Right cardiac atrium (tissue), 5 donors: ENCODE measurements at regions of chr1 and their contacts with region 1.

Region 1: GRCh38 chr1:183339556-183340167 is 78.5 kb downstream of the NMNAT2 start:
- DNase-seq: no peak
- ATAC-seq: no peak
- H3K4me3 ChIP-seq: no peak overlapping the region
- H3K27ac ChIP-seq: peak overlapping the region; percentile 66
- H3K4me1 ChIP-seq: no peaks in the 10 kb centered on the region
- H3K27me3 ChIP-seq: no peaks in the 10 kb centered on the region

Region 2: DNA sequence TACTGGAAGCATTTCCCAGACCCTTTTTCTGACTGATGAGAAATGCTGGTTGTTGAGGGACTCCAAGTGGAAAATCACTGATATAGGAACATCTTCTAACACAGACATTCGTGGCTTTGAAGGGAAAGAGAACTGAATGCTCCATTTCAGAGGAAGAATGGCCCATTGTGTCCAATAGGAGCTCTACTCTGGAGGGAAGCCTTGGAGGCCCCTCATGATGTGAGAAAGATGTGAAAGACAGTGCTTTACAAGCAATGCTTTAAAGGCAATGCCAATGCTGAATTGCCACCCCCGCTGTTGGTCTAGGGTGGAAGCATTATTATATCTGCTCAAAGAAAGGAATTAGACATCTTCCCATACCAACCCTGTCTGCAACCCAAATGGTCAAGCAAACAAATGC is 64.8 kb after region 1 on chr1:
- intact Hi-C with region 1: no loop called
- DNase-seq: no peak
- ATAC-seq: no peak
- H3K4me3 ChIP-seq: no peak overlapping the region
- H3K27ac ChIP-seq: no peak overlapping the region
- H3K4me1 ChIP-seq: no peaks in the 10 kb centered on the region
- H3K27me3 ChIP-seq: no peaks in the 10 kb centered on the region

Region 3: DNA sequence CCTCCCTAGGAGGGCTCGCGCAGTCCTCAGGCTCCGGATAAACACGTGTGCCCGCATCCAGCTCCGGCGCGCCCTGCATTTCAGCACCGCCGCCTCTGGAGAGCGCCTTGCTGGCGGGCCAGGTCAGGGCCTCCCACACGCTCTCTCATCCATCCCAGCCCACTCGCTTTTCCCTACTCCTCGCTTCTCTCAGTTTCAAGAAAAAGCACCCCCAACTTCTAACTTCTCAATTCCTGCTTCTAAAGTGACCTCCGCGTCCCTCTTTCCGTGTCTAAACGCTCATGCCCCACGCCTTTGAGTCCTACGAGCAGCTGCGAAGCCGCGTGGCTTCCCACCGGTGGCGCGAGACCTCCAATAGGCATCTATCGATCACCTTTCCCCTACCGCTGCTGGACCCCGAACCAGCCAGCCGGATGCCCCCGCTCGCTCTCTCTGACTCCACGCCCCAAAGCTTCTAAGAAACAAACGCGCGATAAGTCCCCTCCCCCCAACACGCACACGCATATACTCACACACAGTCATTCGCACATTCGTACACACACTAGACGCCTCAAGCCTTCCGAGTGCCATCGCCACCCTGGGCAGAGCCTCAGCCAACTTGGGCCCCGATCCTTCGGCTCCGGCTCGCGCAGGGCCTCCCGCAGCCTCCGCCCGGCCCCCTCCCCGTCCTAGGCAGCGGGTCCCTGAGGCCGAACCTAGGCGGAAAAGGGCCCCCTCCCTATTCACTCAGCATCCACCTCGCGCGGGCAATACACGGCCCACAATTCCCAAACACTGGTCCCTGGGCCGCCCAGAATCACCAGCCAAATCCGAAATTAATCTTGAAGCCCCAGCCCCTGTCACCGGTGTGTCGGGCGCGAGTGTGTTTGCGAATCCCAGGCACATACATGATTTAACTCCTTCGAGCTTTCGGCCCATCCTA is 77.4 kb after region 1 on chr1:
- intact Hi-C with region 1: loop called in 1 of 4 experiments (anchors 2 kb)
- DNase-seq: peak; percentile 69 to 89 (median 89)
- ATAC-seq: peak; percentile 93 to 95
- H3K4me3 ChIP-seq: peak overlapping the region; percentile 54
- H3K27ac ChIP-seq: no peak overlapping the region
- H3K4me1 ChIP-seq: peaks cover 6% of the 10 kb centered on the region
- H3K27me3 ChIP-seq: no peaks in the 10 kb centered on the region

Region 4: DNA sequence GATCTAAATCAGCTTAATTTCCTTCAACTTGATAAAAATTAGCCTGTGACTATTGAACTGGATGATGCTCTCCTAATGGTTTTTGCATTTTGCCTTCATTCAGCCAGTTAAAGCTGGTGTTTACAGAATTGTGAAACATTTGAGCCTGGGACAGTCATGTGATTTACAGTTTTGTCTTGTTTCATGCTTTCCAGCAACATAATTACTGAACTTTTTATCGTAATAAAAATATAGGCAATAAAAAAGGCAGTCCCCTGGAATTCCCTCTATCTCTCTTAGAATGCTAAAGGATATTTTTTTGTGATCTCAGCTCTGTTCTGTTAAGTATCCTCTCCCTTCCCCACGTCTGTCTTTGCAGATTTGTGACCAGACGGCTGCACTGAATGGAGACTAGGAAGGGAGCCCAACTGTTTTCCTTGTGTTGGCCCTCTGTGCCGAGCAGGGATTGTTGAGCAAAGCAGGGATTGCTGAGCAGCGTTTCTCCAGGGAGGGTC is 394.9 kb after region 1 on chr1:
- intact Hi-C with region 1: no loop called
- DNase-seq: peak; percentile 41 to 69 (median 65)
- ATAC-seq: peak; percentile 82 to 96
- H3K4me3 ChIP-seq: no peak overlapping the region
- H3K27ac ChIP-seq: no peak overlapping the region
- H3K4me1 ChIP-seq: peaks cover 3% of the 10 kb centered on the region
- H3K27me3 ChIP-seq: no peaks in the 10 kb centered on the region